MCF 10A (cell line): ENCODE measurements at regions of chr3 and their contacts with region 1.

Region 1: DNA sequence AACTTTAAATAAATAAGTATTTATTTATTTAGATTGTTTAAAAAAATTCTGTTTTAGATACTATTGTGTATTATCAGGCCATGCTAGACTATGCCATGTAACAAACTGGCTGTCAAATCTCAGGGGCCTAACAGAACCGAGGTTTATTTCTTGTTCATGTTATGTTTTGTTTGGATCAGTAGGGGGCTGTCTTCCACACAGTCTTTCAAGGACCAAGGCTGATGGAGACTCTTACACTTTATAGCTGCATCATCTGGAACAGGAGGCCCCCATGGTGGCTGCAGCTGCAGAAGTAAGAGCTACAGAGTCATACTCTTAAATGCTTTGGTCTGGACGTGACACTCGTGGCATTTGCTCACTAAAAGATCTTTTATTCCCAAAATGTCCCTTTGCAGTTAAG is 33.0 kb upstream of the ARL14 start:
- DNase-seq: peak; percentile 34
- H3K4me3 Mint-ChIP-seq: no peak overlapping the region
- H3K27ac Mint-ChIP-seq: no peak overlapping the region
- H3K4me1 Mint-ChIP-seq: peaks cover 6% of the 10 kb centered on the region
- H3K27me3 Mint-ChIP-seq: no peaks in the 10 kb centered on the region
- CTCF ChIP-seq: peak; percentile 22

Region 2: GRCh38 chr3:159418571-159419526 is 1225.1 kb before region 1 on chr3:
- CTCF ChIA-PET with region 1: no interaction called
- POLR2A ChIA-PET with region 1: no interaction called
- intact Hi-C with region 1: loop called (anchors 10 kb)
- DNase-seq: peak; percentile 26
- H3K4me3 Mint-ChIP-seq: no peak overlapping the region
- H3K27ac Mint-ChIP-seq: peak overlapping the region; percentile 14
- H3K4me1 Mint-ChIP-seq: no peaks in the 10 kb centered on the region
- H3K27me3 Mint-ChIP-seq: no peaks in the 10 kb centered on the region
- CTCF ChIP-seq: no peak

Region 3: DNA sequence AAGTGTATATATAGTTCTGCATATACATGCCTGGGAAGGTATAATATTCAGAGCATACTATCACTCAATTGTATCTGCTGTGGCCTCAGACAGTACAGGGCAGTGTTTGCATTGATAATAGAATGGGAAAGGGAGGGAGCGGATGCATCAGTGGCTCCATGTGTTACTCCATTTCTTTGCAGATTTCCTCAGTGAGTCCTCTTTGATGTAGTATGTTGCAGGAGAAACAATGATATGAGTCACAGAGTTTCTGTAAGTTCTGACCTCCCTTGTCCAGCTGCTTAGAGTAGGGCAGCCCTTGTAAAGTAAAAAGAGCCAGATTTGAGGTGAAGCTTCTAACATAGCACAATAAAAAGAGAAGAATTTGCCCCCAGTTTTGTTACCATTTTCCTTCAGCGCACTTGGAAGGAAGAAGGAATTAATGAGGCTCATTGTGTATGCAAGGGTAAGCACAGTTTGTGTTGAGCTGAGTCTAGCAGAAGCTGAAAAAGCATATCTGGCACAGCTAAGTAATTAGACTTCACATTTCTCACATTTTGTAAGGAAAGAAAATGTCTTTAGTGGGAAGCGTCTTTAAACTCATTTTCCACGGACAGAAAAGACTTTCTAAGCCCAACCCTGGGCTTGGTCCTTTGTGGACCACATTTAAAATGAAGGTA is 1211.2 kb before region 1 on chr3:
- CTCF ChIA-PET with region 1: no interaction called
- POLR2A ChIA-PET with region 1: no interaction called
- intact Hi-C with region 1: no loop called
- DNase-seq: peak; percentile 15
- H3K4me3 Mint-ChIP-seq: no peak overlapping the region
- H3K27ac Mint-ChIP-seq: no peak overlapping the region
- H3K4me1 Mint-ChIP-seq: no peaks in the 10 kb centered on the region
- H3K27me3 Mint-ChIP-seq: peaks cover 11% of the 10 kb centered on the region
- CTCF ChIP-seq: no peak

Region 4: GRCh38 chr3:159548675-159549335 is 1095.2 kb before region 1 on chr3:
- CTCF ChIA-PET with region 1: no interaction called
- POLR2A ChIA-PET with region 1: no interaction called
- intact Hi-C with region 1: no loop called
- DNase-seq: peak; percentile 4
- H3K4me3 Mint-ChIP-seq: no peak overlapping the region
- H3K27ac Mint-ChIP-seq: no peak overlapping the region
- H3K4me1 Mint-ChIP-seq: no peaks in the 10 kb centered on the region
- H3K27me3 Mint-ChIP-seq: no peaks in the 10 kb centered on the region
- CTCF ChIP-seq: no peak

Region 5: DNA sequence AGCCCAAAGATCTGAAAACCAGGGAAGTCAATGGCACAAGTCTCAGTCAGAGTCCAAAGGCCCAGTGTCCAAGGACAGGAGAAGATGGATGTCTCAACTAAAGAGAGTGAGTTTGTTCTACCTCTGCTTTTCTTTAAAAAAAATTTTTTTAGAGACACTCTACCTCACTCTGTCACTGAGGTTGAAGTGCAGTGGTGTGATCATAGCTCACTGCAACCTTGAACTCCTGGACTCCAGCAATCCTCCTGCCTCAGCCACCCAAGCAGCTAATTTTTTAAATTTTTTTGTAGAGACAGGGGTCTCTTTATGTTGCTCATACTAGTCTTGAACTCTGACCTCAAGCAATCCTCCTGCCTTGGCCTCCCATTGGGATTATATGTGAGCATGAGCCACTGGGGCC is 38.7 kb before region 1 on chr3:
- CTCF ChIA-PET with region 1: no interaction called
- POLR2A ChIA-PET with region 1: no interaction called
- intact Hi-C with region 1: no loop called
- DNase-seq: no peak
- H3K4me3 Mint-ChIP-seq: no peak overlapping the region
- H3K27ac Mint-ChIP-seq: no peak overlapping the region
- H3K4me1 Mint-ChIP-seq: no peaks in the 10 kb centered on the region
- H3K27me3 Mint-ChIP-seq: no peaks in the 10 kb centered on the region
- CTCF ChIP-seq: no peak

Region 6: DNA sequence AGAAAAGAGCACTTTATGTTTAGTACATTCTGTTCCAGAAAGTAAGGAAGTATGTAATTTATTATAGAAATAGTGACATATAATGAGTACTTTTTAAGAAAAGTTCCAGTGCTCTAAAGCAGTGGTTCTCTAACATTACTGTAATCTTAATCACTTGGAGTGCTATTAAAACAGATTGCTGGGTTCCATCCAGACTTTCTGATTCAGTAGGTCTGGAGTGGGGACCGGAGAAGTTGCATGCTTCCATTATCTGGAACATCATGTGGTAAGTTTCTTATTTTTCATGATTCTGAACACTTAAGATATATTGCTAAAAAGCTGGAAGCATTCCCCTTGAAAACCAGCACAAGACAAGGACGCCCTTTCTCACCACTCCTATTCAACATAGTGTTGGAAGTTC is 14.5 kb before region 1 on chr3:
- CTCF ChIA-PET with region 1: no interaction called
- POLR2A ChIA-PET with region 1: no interaction called
- intact Hi-C with region 1: no loop called
- DNase-seq: no peak
- H3K4me3 Mint-ChIP-seq: no peak overlapping the region
- H3K27ac Mint-ChIP-seq: no peak overlapping the region
- H3K4me1 Mint-ChIP-seq: no peaks in the 10 kb centered on the region
- H3K27me3 Mint-ChIP-seq: no peaks in the 10 kb centered on the region
- CTCF ChIP-seq: no peak